ENCODE measurements at regions of chr19 and their contacts with region 1.

Region 1: GRCh38 chr19:54115109-54116063 is at the starts of genes PRPF31 and TFPT:
- DNase-seq: peak; percentile 97
- total RNA-seq, gene PRPF31: 34.0 TPM
- total RNA-seq, gene TFPT: 15.2 TPM

Region 2: DNA sequence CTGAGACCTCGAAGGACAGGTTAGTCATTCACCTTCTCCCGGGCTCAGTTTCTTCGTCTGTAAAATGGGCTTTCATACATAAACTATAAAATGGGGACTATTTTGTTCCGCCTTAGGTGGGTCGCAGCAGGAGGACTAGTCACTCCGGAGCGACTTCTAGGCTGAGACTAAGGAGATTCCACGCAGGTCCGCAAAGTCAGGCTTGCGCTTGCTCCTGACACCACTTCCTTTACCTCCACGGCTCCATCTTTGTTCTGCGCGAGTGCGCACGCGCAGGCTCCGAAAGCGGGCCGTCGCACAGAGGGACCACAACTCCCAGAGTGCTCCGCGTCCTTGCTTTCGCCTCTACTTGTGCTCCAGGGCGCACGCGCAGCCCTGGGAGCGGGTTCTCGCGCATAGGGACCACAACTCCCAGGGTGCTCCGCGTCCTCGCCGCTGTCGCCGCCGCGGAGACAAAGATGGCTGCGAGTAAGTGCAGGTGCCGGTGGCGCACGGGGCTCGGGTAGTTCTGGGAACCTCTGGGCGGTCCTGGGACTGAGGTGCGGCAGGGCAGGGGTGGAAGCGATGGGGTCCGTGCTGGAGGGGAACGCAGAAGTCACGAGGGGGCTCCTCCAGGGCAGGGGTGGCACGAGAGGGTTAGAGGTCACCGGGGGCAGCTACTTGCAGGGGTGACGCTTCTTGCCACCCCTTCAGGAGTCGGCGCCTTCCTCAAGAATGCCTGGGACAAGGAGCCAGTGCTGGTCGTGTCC is 12.8 kb before region 1 on chr19 and contains the start of gene NDUFA3:
- intact Hi-C with region 1: loop called (anchors 1 kb)
- DNase-seq: peak; percentile 99
- total RNA-seq, gene NDUFA3: 283 TPM

Region 3: GRCh38 chr19:54137086-54137921 is 21.9 kb after region 1 on chr19 and contains the start of gene CNOT3:
- intact Hi-C with region 1: loop called (anchors 1 kb)
- DNase-seq: peak; percentile 100
- total RNA-seq, gene CNOT3: 22.3 TPM